CD4-positive, alpha-beta memory T cell (primary cell): ENCODE measurements at regions of chr10 and their contacts with region 1.

Region 1: GRCh38 chr10:50624866-50625692 is 1.3 kb upstream of the SGMS1 start:
- DNase-seq: peak; percentile 61 to 80 (median 65)
- H3K4me3 ChIP-seq: peak overlapping the region; percentile 68 to 97
- H3K4me3 Mint-ChIP-seq: peak overlapping the region; percentile 93 to 98 (median 96)
- H3K27ac ChIP-seq: peak overlapping the region; percentile 99
- H3K27ac Mint-ChIP-seq: peak overlapping the region; percentile 90 to 99 (median 98)
- H3K4me1 ChIP-seq: peaks cover 26% of the 10 kb centered on the region
- H3K4me1 Mint-ChIP-seq: peaks cover 13 to 41% (median 21%) of the 10 kb centered on the region in 4 donors
- H3K27me3 ChIP-seq: no peaks in the 10 kb centered on the region
- H3K27me3 Mint-ChIP-seq: no peaks in the 10 kb centered on the region

Region 2: DNA sequence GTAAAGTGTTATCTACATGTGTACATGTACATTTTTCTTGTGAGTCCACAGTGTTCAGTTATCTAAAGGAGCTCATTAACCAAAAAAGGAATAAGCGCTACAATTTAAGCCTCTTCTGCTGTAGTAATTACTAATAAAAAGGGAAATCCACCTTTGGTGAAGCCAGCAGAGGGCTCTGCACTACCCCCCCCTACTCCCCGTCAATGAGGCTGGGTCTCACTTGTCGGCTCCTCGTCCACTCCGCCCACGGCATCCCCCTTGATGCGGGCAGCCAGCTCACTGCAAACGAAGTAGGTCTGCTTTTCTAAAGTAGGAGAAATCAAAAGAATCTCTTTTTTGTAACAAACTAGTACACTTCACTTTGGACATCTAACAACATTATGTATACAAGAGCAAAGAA is 562.0 kb before region 1 on chr10:
- CTCF ChIA-PET with region 1: no interaction called
- POLR2A ChIA-PET with region 1: interaction called, 11 read pairs
- intact Hi-C with region 1: no loop called
- DNase-seq: no peak
- H3K4me3 ChIP-seq: no peak overlapping the region
- H3K4me3 Mint-ChIP-seq: peak overlapping the region in 1 of 8 donors; percentile 48
- H3K27ac ChIP-seq: no peak overlapping the region
- H3K27ac Mint-ChIP-seq: no peak overlapping the region
- H3K4me1 ChIP-seq: no peaks in the 10 kb centered on the region
- H3K4me1 Mint-ChIP-seq: peaks cover 1 to 19% (median 4%) of the 10 kb centered on the region in 4 donors
- H3K27me3 ChIP-seq: no peaks in the 10 kb centered on the region
- H3K27me3 Mint-ChIP-seq: peaks cover 0 to 1% of the 10 kb centered on the region in 2 donors

Region 3: GRCh38 chr10:50375051-50375452 is 250.0 kb before region 1 on chr10:
- CTCF ChIA-PET with region 1: no interaction called
- POLR2A ChIA-PET with region 1: no interaction called
- intact Hi-C with region 1: no loop called
- DNase-seq: no peak
- H3K4me3 ChIP-seq: no peak overlapping the region
- H3K4me3 Mint-ChIP-seq: no peak overlapping the region
- H3K27ac ChIP-seq: no peak overlapping the region
- H3K27ac Mint-ChIP-seq: no peak overlapping the region
- H3K4me1 ChIP-seq: peaks cover 26% of the 10 kb centered on the region
- H3K4me1 Mint-ChIP-seq: peaks cover 5 to 22% (median 14%) of the 10 kb centered on the region in 4 donors
- H3K27me3 ChIP-seq: no peaks in the 10 kb centered on the region
- H3K27me3 Mint-ChIP-seq: no peaks in the 10 kb centered on the region

Region 4: DNA sequence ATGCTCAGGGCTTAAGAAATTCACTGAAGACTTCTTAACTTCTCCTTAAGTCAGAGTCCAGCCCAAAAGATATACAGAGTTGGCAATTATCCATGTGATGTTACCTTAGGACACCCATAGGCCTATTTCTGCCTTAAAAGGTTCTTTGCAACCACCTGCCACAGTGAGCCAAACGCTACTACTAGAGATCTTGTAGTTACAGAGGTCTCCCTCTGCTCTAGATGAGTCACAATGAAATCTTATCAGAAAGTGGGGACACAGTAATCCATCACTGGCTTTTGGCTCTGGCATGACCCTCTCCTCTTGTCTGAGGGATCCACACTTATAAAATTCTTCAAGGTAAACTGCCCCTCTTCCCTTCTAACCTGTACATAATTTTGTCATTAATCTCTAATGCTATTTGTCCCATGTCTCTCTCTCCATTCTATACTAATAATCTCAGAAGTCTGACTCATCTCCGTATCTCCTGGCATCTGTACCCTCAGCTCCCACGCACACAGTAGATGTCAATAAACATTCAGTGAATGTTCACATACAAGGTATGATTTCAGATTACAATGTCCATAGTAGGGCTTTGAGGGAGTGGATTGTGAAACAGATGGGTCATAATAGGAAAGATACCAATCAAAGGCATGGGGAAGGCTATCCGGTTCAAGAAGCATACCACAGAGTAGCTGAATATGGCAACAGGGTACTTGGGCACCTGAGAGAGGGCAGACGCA is 113.4 kb before region 1 on chr10:
- CTCF ChIA-PET with region 1: no interaction called
- POLR2A ChIA-PET with region 1: interaction called, 11 read pairs
- intact Hi-C with region 1: no loop called
- DNase-seq: peak in 1 of 5 donors; percentile 46
- H3K4me3 ChIP-seq: no peak overlapping the region
- H3K4me3 Mint-ChIP-seq: peak overlapping the region in 7 of 8 donors; percentile 4 to 82 (median 32)
- H3K27ac ChIP-seq: no peak overlapping the region
- H3K27ac Mint-ChIP-seq: peak overlapping the region; percentile 1 to 84 (median 47)
- H3K4me1 ChIP-seq: peaks cover 64% of the 10 kb centered on the region
- H3K4me1 Mint-ChIP-seq: peaks cover 61 to 86% (median 73%) of the 10 kb centered on the region in 4 donors
- H3K27me3 ChIP-seq: no peaks in the 10 kb centered on the region
- H3K27me3 Mint-ChIP-seq: no peaks in the 10 kb centered on the region

Region 5: GRCh38 chr10:50605269-50606263 is 19.5 kb before region 1 on chr10:
- CTCF ChIA-PET with region 1: interaction called, 6 read pairs
- POLR2A ChIA-PET with region 1: interaction called, 16 read pairs
- intact Hi-C with region 1: loop called (anchors 2 kb)
- DNase-seq: no peak
- H3K4me3 ChIP-seq: no peak overlapping the region
- H3K4me3 Mint-ChIP-seq: peak overlapping the region in 6 of 8 donors; percentile 22 to 65 (median 53)
- H3K27ac ChIP-seq: no peak overlapping the region
- H3K27ac Mint-ChIP-seq: peak overlapping the region; percentile 6 to 94 (median 59)
- H3K4me1 ChIP-seq: peaks cover 76% of the 10 kb centered on the region
- H3K4me1 Mint-ChIP-seq: peaks cover 45 to 83% (median 72%) of the 10 kb centered on the region in 4 donors
- H3K27me3 ChIP-seq: no peaks in the 10 kb centered on the region
- H3K27me3 Mint-ChIP-seq: no peaks in the 10 kb centered on the region

Region 6: GRCh38 chr10:50636618-50637579 is 11.8 kb after region 1 on chr10:
- CTCF ChIA-PET with region 1: interaction called, 30 read pairs
- POLR2A ChIA-PET with region 1: interaction called, 84 read pairs
- intact Hi-C with region 1: loop called (anchors 1 kb)
- DNase-seq: peak; percentile 53 to 68 (median 60)
- H3K4me3 ChIP-seq: peak overlapping the region; percentile 11 to 13
- H3K4me3 Mint-ChIP-seq: peak overlapping the region; percentile 57 to 85 (median 78)
- H3K27ac ChIP-seq: no peak overlapping the region
- H3K27ac Mint-ChIP-seq: peak overlapping the region; percentile 27 to 80 (median 76)
- H3K4me1 ChIP-seq: peaks cover 41% of the 10 kb centered on the region
- H3K4me1 Mint-ChIP-seq: peaks cover 26 to 49% (median 35%) of the 10 kb centered on the region in 4 donors
- H3K27me3 ChIP-seq: no peaks in the 10 kb centered on the region
- H3K27me3 Mint-ChIP-seq: no peaks in the 10 kb centered on the region

Region 7: DNA sequence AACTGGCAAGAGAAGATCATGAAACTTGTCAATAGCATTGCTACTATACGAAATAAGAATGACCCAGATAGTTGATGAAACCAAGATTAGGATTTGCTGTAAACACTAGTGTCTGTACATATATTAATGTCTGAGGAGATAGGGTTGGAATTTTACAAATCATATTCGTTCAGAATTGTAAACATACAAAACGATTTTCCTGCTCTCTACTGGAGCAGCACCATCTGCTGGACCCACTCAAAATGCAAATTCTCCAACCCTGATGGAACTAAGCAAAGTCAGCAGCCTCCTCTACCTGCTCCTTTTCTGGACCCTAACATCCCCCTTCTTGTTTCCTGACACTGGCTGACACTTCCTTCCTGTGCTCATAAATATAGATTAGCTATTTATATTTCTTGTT is 28.1 kb after region 1 on chr10:
- CTCF ChIA-PET with region 1: interaction called, 12 read pairs
- POLR2A ChIA-PET with region 1: interaction called, 14 read pairs
- intact Hi-C with region 1: loop called (anchors 1 kb)
- DNase-seq: peak in 4 of 5 donors; percentile 29 to 37 (median 32)
- H3K4me3 ChIP-seq: no peak overlapping the region
- H3K4me3 Mint-ChIP-seq: peak overlapping the region in 1 of 8 donors; percentile 33
- H3K27ac ChIP-seq: no peak overlapping the region
- H3K27ac Mint-ChIP-seq: peak overlapping the region in 1 of 7 donors; percentile 32
- H3K4me1 ChIP-seq: peaks cover 15% of the 10 kb centered on the region
- H3K4me1 Mint-ChIP-seq: peaks cover 15 to 22% (median 16%) of the 10 kb centered on the region in 4 donors
- H3K27me3 ChIP-seq: no peaks in the 10 kb centered on the region
- H3K27me3 Mint-ChIP-seq: no peaks in the 10 kb centered on the region

Region 8: DNA sequence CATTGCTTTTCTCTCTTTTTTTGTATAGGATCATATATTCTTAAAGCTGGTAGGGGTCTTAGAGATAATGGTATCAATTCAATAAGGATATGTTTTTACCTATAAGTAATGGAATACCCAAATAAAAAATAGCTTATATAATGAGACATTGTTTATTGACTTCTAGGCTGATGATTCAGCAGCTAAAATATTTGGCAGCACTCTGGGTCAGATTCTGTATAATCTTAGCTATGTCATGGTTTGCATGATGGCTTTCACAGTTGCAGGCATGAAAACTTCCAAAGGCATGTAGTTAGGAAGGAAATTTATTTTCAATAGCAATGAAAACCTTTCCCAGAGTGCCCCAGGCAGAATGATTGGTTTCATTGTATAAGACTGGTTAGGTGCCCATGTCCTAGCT is 292.4 kb after region 1 on chr10:
- CTCF ChIA-PET with region 1: no interaction called
- POLR2A ChIA-PET with region 1: no interaction called
- intact Hi-C with region 1: no loop called
- DNase-seq: no peak
- H3K4me3 ChIP-seq: no peak overlapping the region
- H3K4me3 Mint-ChIP-seq: no peak overlapping the region
- H3K27ac ChIP-seq: no peak overlapping the region
- H3K27ac Mint-ChIP-seq: no peak overlapping the region
- H3K4me1 ChIP-seq: no peaks in the 10 kb centered on the region
- H3K4me1 Mint-ChIP-seq: no peaks in the 10 kb centered on the region
- H3K27me3 ChIP-seq: peaks cover 4% of the 10 kb centered on the region
- H3K27me3 Mint-ChIP-seq: peaks cover 3 to 4% of the 10 kb centered on the region in 2 donors

Region 9: DNA sequence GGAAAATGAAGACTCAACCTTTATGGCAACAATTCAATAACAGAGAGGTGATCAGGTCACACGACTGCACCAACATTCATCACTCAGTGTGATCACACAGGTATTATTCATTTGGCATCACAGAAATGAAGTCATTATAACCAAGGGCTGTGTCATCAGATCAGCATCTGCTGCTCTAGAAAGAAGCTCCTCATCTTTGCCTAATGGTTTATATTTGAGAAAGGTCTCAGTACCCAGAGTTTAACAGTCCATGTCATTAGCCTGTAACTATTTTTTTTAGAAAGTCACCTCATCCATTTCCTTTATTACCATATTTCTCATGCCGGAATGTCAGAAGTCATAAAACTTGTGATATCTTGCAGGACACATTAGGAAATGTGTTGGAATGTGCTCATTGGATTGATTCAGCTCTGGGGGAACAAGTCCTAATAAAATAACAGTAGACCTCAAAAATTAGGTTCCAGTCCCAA is 404.1 kb after region 1 on chr10:
- CTCF ChIA-PET with region 1: no interaction called
- POLR2A ChIA-PET with region 1: no interaction called
- intact Hi-C with region 1: no loop called
- DNase-seq: no peak
- H3K4me3 ChIP-seq: no peak overlapping the region
- H3K4me3 Mint-ChIP-seq: no peak overlapping the region
- H3K27ac ChIP-seq: no peak overlapping the region
- H3K27ac Mint-ChIP-seq: no peak overlapping the region
- H3K4me1 ChIP-seq: no peaks in the 10 kb centered on the region
- H3K4me1 Mint-ChIP-seq: no peaks in the 10 kb centered on the region
- H3K27me3 ChIP-seq: no peaks in the 10 kb centered on the region
- H3K27me3 Mint-ChIP-seq: peaks cover 2% of the 10 kb centered on the region in 2 donors